ENCODE measurements at regions of chr3 and their contacts with region 1.

Region 1: DNA sequence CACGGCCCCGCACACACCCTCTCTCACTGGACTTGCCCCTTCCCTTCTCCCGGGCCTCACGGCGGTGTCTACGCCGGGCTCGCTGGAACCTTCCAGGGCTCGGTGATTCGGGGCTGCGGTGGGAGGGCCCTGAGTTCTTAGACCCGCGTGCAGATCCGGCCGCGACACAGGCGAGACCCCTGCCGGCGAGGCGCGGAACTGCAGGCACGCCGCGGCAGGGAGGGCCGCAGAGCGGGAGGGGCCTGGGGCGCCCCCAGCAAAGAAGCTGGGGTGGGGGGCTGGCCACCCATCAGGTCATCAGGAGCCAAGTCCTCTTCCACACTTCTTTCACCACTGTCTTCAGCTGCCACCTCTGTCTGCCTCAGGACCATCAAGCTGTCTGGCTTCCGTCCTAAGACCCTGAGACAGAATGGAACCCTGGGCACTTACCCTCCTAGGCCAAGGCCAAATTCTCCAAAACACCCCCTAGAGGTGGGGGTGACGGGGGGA is 164.5 kb downstream of the XXYLT1 start:
- DNase-seq: peak in 1 of 2 experiments; percentile 90
- H3K4me3 ChIP-seq: peak overlapping the region in 1 of 4 experiments; percentile 4; a peak in 1 of 8 replicates
- H3K27ac ChIP-seq: no peak overlapping the region
- H3K4me1 ChIP-seq: peaks cover 2 to 4% (median 2%) of the 10 kb centered on the region in 4 experiments; a peak in 4 of 7 replicates
- H3K27me3 ChIP-seq: no peaks in the 10 kb centered on the region
- CTCF ChIP-seq: peak; percentile 84 to 96 (median 90)
- EP300 ChIP-seq: 0 out of 3 replicates have a peak, but pooled peaks of 1 of the 2 experiments have one; percentile 41
- POLR2A ChIP-seq: no peak
- RAD21 ChIP-seq: peak; percentile 85 to 91

Region 2: GRCh38 chr3:195001961-195002861 is 104.3 kb before region 1 on chr3:
- CTCF ChIA-PET with region 1: interaction called, 21 read pairs
- POLR2A ChIA-PET with region 1: no interaction called
- DNase-seq: peak; percentile 38 to 59
- H3K4me3 ChIP-seq: no peak overlapping the region
- H3K27ac ChIP-seq: no peak overlapping the region
- H3K4me1 ChIP-seq: no peaks in the 10 kb centered on the region; a peak in 3 of 7 replicates
- H3K27me3 ChIP-seq: no peaks in the 10 kb centered on the region
- CTCF ChIP-seq: peak; percentile 71 to 89 (median 80)
- EP300 ChIP-seq: no peak
- POLR2A ChIP-seq: no peak
- RAD21 ChIP-seq: peak; percentile 71 to 79

Region 3: GRCh38 chr3:195087328-195087727 is 19.1 kb before region 1 on chr3:
- CTCF ChIA-PET with region 1: interaction called, 19 read pairs
- POLR2A ChIA-PET with region 1: interaction called, 3 read pairs
- DNase-seq: no peak
- H3K4me3 ChIP-seq: peak overlapping the region; percentile 40 to 59 (median 48); a peak in 7 of 8 replicates
- H3K27ac ChIP-seq: peak overlapping the region; percentile 15; the same call in 1 of the 2 replicates
- H3K4me1 ChIP-seq: peaks cover 0 to 19% (median 12%) of the 10 kb centered on the region in 4 experiments; a peak in 6 of 7 replicates
- H3K27me3 ChIP-seq: no peaks in the 10 kb centered on the region; a peak in 1 of 7 replicates
- CTCF ChIP-seq: no peak
- EP300 ChIP-seq: no peak
- POLR2A ChIP-seq: no peak
- RAD21 ChIP-seq: no peak

Region 4: DNA sequence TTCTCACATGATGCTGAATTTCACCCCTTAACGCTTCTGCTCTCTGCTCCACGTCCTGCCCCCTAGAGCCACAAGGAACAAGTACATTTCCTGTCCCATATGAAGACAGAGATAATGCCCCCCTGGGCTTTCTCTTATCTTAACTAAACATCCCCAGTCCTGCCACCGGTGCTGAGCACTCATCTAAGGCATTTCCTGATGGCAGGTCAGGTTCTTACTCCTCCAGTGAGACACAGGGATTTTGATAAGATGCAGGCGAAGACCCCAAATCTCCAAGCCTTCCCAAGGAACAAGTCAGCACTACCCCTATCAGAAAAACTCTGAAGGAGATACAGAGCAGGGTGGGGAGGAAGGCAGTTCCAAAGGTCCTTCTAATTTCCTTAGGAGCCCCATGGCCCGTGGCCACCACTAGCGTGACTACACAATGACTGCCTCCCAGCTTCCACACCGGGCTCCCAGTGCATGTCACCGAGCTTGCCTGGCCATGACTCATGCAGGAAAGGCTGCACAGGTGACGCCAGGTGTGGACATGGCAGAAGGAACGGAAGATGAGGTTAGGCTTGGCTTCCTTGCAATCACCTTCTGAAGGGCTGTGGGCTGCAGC is 11.6 kb after region 1 on chr3:
- CTCF ChIA-PET with region 1: interaction called, 28 read pairs
- POLR2A ChIA-PET with region 1: no interaction called
- DNase-seq: no peak
- H3K4me3 ChIP-seq: no peak overlapping the region
- H3K27ac ChIP-seq: no peak overlapping the region
- H3K4me1 ChIP-seq: peaks cover 9 to 21% (median 13%) of the 10 kb centered on the region in 4 experiments
- H3K27me3 ChIP-seq: no peaks in the 10 kb centered on the region
- CTCF ChIP-seq: peak in 1 of 3 experiments; percentile 36; a peak in 1 of 4 replicates
- EP300 ChIP-seq: no peak
- POLR2A ChIP-seq: no peak
- RAD21 ChIP-seq: 0 out of 4 replicates have a peak, but pooled peaks have one; percentile 3 to 4

Region 5: GRCh38 chr3:195133462-195133861 is 27.0 kb after region 1 on chr3:
- CTCF ChIA-PET with region 1: interaction called, 10 read pairs
- POLR2A ChIA-PET with region 1: no interaction called
- DNase-seq: no peak
- H3K4me3 ChIP-seq: no peak overlapping the region
- H3K27ac ChIP-seq: no peak overlapping the region
- H3K4me1 ChIP-seq: no peaks in the 10 kb centered on the region
- H3K27me3 ChIP-seq: no peaks in the 10 kb centered on the region
- CTCF ChIP-seq: no peak
- EP300 ChIP-seq: no peak
- POLR2A ChIP-seq: no peak
- RAD21 ChIP-seq: no peak